ENCODE measurements at regions of chr3 and their contacts with region 1.

Region 1: GRCh38 chr3:135641761-135642160 is 323.8 kb upstream of the PPP2R3A start:
- DNase-seq: no peak
- ATAC-seq: no peak
- H3K4me3 ChIP-seq: no peak overlapping the region
- H3K4me3 Mint-ChIP-seq: no peak overlapping the region
- H3K27ac ChIP-seq: no peak overlapping the region
- H3K27ac Mint-ChIP-seq: no peak overlapping the region
- H3K4me1 ChIP-seq: no peaks in the 10 kb centered on the region
- H3K4me1 Mint-ChIP-seq: no peaks in the 10 kb centered on the region
- H3K27me3 ChIP-seq: no peaks in the 10 kb centered on the region
- H3K27me3 Mint-ChIP-seq: no peaks in the 10 kb centered on the region
- CTCF ChIP-seq: no peak

Region 2: GRCh38 chr3:135621184-135621920 is 20.4 kb before region 1 on chr3:
- CTCF ChIA-PET with region 1: no interaction called
- POLR2A ChIA-PET with region 1: no interaction called
- intact Hi-C with region 1: loop called in 1 of 2 experiments (anchors 1 kb)
- DNase-seq: no peak
- ATAC-seq: no peak
- H3K4me3 ChIP-seq: no peak overlapping the region
- H3K4me3 Mint-ChIP-seq: no peak overlapping the region
- H3K27ac ChIP-seq: no peak overlapping the region
- H3K27ac Mint-ChIP-seq: no peak overlapping the region
- H3K4me1 ChIP-seq: no peaks in the 10 kb centered on the region
- H3K4me1 Mint-ChIP-seq: no peaks in the 10 kb centered on the region
- H3K27me3 ChIP-seq: no peaks in the 10 kb centered on the region
- H3K27me3 Mint-ChIP-seq: no peaks in the 10 kb centered on the region
- CTCF ChIP-seq: no peak

Region 3: GRCh38 chr3:136237103-136237502 is 595.3 kb after region 1 on chr3:
- CTCF ChIA-PET with region 1: no interaction called
- POLR2A ChIA-PET with region 1: no interaction called
- intact Hi-C with region 1: no loop called
- DNase-seq: no peak
- ATAC-seq: no peak
- H3K4me3 ChIP-seq: no peak overlapping the region
- H3K4me3 Mint-ChIP-seq: no peak overlapping the region
- H3K27ac ChIP-seq: no peak overlapping the region
- H3K27ac Mint-ChIP-seq: no peak overlapping the region
- H3K4me1 ChIP-seq: no peaks in the 10 kb centered on the region
- H3K4me1 Mint-ChIP-seq: no peaks in the 10 kb centered on the region
- H3K27me3 ChIP-seq: peaks cover 0 to 2% of the 10 kb centered on the region in 2 experiments
- H3K27me3 Mint-ChIP-seq: peaks cover 2% of the 10 kb centered on the region
- CTCF ChIP-seq: no peak

Region 4: DNA sequence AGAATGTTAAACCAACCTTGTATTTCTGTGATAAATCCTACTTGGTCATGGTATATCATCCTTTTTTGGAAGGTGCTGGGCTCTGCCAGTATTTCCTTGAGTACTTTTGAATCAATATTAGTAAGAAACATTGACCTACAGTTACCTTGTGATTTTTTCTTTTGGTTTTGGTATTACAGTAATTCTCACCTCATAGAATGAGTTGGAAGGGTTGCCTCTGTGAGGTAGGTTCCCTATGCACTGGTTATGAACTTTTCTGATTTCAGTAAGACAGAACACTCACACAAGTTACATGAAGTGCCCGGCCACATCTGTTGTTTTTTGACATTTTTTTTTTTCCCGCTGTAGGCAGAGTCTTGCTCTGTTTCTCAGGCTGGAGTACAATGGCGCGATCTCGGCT is 628.4 kb after region 1 on chr3:
- CTCF ChIA-PET with region 1: no interaction called
- POLR2A ChIA-PET with region 1: no interaction called
- intact Hi-C with region 1: no loop called
- DNase-seq: no peak
- ATAC-seq: no peak
- H3K4me3 ChIP-seq: no peak overlapping the region
- H3K4me3 Mint-ChIP-seq: no peak overlapping the region
- H3K27ac ChIP-seq: no peak overlapping the region
- H3K27ac Mint-ChIP-seq: no peak overlapping the region
- H3K4me1 ChIP-seq: no peaks in the 10 kb centered on the region
- H3K4me1 Mint-ChIP-seq: peaks cover 30% of the 10 kb centered on the region
- H3K27me3 ChIP-seq: no peaks in the 10 kb centered on the region
- H3K27me3 Mint-ChIP-seq: no peaks in the 10 kb centered on the region
- CTCF ChIP-seq: no peak